ENCODE measurements at regions of chr6 and their contacts with region 1.

Region 1: GRCh38 chr6:87772597-87773530 is 70.8 kb upstream of the AKIRIN2 start:
- DNase-seq: no peak
- H3K4me3 ChIP-seq: no peak overlapping the region
- H3K27ac ChIP-seq: no peak overlapping the region
- H3K4me1 ChIP-seq: no peaks in the 10 kb centered on the region
- CTCF ChIP-seq: no peak

Region 2: DNA sequence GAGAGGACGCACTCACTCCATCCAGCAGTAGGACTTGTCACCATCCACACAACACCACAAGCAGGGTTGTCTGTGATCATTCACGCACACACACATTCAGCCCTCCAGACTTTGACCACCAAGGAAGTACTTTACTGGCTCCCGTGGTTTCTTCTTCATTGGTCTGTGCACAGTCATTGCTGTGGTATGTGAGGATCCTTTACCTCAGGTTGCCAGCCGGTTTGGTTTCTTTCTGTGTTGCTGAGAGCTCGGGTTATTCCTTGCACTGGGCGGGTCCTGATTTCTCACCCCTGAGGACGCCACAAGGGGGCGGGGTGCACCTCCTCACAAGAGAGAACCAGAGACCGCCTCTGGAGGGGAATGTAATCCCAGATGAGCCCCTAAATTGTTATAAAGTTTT is 288.9 kb before region 1 on chr6:
- CTCF ChIA-PET with region 1: no interaction called
- POLR2A ChIA-PET with region 1: no interaction called
- intact Hi-C with region 1: no loop called
- DNase-seq: peak; percentile 57
- H3K4me3 ChIP-seq: no peak overlapping the region
- H3K27ac ChIP-seq: no peak overlapping the region
- H3K4me1 ChIP-seq: no peaks in the 10 kb centered on the region
- CTCF ChIP-seq: peak; percentile 80

Region 3: DNA sequence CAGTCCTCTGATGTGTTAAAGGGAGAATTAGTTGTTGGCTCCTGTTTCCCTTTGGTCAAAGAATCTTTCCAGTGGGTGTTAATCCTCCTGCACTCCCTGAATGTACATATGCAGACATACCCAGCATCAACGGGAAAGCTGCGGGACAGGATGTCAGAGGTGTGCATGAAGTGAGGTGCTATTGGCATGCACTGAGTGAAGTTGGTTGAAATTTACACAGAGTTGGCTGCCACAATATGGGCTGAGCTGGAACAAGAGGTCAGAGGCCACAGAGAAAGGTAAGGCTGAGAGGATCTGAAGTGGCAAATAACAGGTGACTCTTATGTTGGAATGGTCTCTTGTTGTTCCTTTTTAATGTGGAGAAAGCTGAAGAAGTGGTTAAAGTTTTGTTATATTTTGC is 11.8 kb after region 1 on chr6:
- CTCF ChIA-PET with region 1: no interaction called
- POLR2A ChIA-PET with region 1: interaction called, 17 read pairs
- intact Hi-C with region 1: no loop called
- DNase-seq: no peak
- H3K4me3 ChIP-seq: no peak overlapping the region
- H3K27ac ChIP-seq: no peak overlapping the region
- H3K4me1 ChIP-seq: peaks cover 5% of the 10 kb centered on the region
- CTCF ChIP-seq: no peak

Measured in OCI-LY7 (cell line).